ENCODE measurements at regions of chr22 and their contacts with region 1.

Region 1: DNA sequence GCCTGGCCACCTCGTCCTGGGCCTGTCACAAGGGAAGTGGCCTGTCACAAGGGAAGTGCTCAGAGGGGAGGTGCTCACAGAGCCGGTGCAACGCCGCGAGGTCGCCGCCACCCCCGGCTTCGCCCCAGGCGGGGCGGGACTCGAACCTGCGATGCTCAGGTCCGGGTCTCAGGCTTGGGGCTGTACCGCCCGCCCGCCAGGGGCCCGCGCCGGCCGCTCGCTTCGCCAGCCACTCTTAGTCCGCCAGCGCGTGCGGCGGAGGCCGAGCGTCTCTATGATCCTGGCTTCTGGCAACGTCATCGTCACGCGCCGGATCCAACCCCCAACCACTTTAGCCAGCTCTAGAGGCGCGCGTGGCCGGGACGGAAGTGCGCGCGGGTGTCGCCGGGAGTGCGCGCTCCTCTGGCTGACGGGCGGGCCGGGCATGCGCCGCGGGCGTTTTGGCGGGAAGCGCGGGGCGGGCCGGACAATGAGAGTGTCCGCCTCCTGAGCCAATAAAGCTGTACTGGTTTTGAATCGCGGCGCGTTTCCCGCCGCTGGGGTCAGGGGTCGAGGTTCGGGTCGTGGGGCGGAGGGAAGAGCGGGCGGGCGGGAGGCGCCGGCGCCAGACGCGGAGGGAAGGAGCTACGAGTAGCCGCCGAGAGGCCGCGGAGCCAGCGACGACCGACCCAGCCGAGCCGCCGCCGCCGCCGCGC is at the start of gene TRMT2A:
- DNase-seq: peak; percentile 97 to 99
- ATAC-seq: peak; percentile 82 to 92 (median 83)
- H3K4me3 ChIP-seq: peak within 1 kb of the TSS; percentile 75
- H3K4me3 Mint-ChIP-seq: peak within 1 kb of the TSS; percentile 92
- H3K27ac ChIP-seq: peak within 1 kb of the TSS; percentile 79
- H3K27ac Mint-ChIP-seq: peak within 1 kb of the TSS; percentile 84 to 93
- H3K4me1 ChIP-seq: peaks cover 70% of the 10 kb centered on the region
- H3K4me1 Mint-ChIP-seq: peaks cover 23 to 45% of the 10 kb centered on the region in 2 donors
- H3K27me3 ChIP-seq: no peaks in the 10 kb centered on the region
- H3K27me3 Mint-ChIP-seq: no peaks in the 10 kb centered on the region
- CTCF ChIP-seq: no peak
- total RNA-seq, gene TRMT2A: 86.4 to 104 (median 86.5) TPM

Region 2: GRCh38 chr22:20079745-20080444 is 37.2 kb before region 1 on chr22 and contains the start of gene DGCR8:
- intact Hi-C with region 1: loop called (anchors 5 kb)
- DNase-seq: peak; percentile 73 to 91
- ATAC-seq: peak; percentile 91 to 96 (median 95)
- H3K4me3 ChIP-seq: peak within 1 kb of the TSS; percentile 72
- H3K4me3 Mint-ChIP-seq: peak within 1 kb of the TSS; percentile 82
- H3K27ac ChIP-seq: peak within 1 kb of the TSS; percentile 17
- H3K27ac Mint-ChIP-seq: peak within 1 kb of the TSS; percentile 17 to 87
- H3K4me1 ChIP-seq: peaks cover 30% of the 10 kb centered on the region
- H3K4me1 Mint-ChIP-seq: peaks cover 33 to 38% of the 10 kb centered on the region in 2 donors
- H3K27me3 ChIP-seq: no peaks in the 10 kb centered on the region
- H3K27me3 Mint-ChIP-seq: no peaks in the 10 kb centered on the region
- CTCF ChIP-seq: no peak
- total RNA-seq, gene DGCR8: 45.3 to 64.7 (median 64.0) TPM

Region 3: GRCh38 chr22:20130739-20131596 is 13.9 kb after region 1 on chr22:
- intact Hi-C with region 1: loop called (anchors 2 kb)
- DNase-seq: peak; percentile 66 to 86
- ATAC-seq: peak; percentile 75 to 83 (median 82)
- H3K4me3 ChIP-seq: peak overlapping the region; percentile 66
- H3K4me3 Mint-ChIP-seq: peak overlapping the region; percentile 74
- H3K27ac ChIP-seq: peak overlapping the region; percentile 67
- H3K27ac Mint-ChIP-seq: peak overlapping the region in 1 of 2 donors; percentile 35
- H3K4me1 ChIP-seq: peaks cover 42% of the 10 kb centered on the region
- H3K4me1 Mint-ChIP-seq: peaks cover 0 to 20% of the 10 kb centered on the region in 2 donors
- H3K27me3 ChIP-seq: no peaks in the 10 kb centered on the region
- H3K27me3 Mint-ChIP-seq: no peaks in the 10 kb centered on the region
- CTCF ChIP-seq: no peak